Aorta (tissue), 5 donors: ENCODE measurements at regions of chr3 and their contacts with region 1.

Region 1: DNA sequence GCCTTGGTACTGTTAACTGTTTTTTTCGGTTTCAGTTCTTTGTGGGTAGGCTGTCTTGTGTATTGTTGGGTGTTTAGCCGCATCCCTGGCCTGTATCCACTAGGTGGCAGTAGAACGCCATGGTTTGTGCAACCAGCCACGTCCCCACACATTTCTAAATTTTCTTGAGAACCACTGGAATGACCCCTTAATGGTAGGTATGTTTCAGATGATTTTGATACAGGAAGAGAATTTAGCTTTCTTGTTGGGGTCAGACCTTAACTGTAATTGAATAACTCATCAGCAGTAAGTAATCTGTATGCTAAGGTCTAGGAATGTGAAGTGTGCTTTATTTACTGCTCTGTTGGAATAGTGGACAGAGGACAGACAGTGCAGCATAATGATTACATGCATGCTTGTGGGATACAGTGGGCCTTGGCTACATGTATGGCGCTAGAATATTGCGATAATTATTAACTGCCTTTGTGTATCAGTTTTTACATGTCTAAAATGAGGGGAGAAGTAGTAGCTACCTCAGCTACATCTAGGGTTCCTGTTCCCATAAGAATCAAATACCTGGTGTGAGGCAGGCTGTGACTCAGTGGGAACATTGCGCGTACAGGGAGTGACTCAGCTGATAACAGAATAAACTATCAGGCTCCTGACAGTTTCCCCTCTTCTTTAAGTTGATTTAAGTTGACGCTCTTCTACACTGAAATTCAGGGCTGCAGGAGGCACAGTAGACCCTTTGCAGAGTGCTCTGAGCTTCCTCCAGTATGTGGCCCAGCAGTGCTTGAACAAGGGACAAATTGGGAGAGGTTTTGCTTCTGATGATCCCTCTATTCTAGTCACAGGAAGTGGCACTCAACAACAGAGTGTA is 25.0 kb upstream of the GPR171 start:
- DNase-seq: peak; percentile 81 to 87
- ATAC-seq: peak; percentile 92
- H3K4me3 ChIP-seq: no peak overlapping the region
- H3K27ac ChIP-seq: no peak overlapping the region
- H3K4me1 ChIP-seq: no peaks in the 10 kb centered on the region
- H3K27me3 ChIP-seq: no peaks in the 10 kb centered on the region

Region 2: GRCh38 chr3:151168269-151169094 is 59.6 kb before region 1 on chr3:
- intact Hi-C with region 1: loop called in 1 of 2 experiments (anchors 5 kb)
- DNase-seq: peak; percentile 83 to 86
- ATAC-seq: peak; percentile 86
- H3K4me3 ChIP-seq: no peak overlapping the region
- H3K27ac ChIP-seq: no peak overlapping the region
- H3K4me1 ChIP-seq: no peaks in the 10 kb centered on the region
- H3K27me3 ChIP-seq: no peaks in the 10 kb centered on the region

Region 3: GRCh38 chr3:151282921-151283320 is 54.9 kb after region 1 on chr3:
- intact Hi-C with region 1: loop called (anchors 2 kb)
- DNase-seq: no peak
- ATAC-seq: peak; percentile 78
- H3K4me3 ChIP-seq: no peak overlapping the region
- H3K27ac ChIP-seq: no peak overlapping the region
- H3K4me1 ChIP-seq: peaks cover 0 to 1% of the 10 kb centered on the region in 2 donors
- H3K27me3 ChIP-seq: no peaks in the 10 kb centered on the region

Region 4: DNA sequence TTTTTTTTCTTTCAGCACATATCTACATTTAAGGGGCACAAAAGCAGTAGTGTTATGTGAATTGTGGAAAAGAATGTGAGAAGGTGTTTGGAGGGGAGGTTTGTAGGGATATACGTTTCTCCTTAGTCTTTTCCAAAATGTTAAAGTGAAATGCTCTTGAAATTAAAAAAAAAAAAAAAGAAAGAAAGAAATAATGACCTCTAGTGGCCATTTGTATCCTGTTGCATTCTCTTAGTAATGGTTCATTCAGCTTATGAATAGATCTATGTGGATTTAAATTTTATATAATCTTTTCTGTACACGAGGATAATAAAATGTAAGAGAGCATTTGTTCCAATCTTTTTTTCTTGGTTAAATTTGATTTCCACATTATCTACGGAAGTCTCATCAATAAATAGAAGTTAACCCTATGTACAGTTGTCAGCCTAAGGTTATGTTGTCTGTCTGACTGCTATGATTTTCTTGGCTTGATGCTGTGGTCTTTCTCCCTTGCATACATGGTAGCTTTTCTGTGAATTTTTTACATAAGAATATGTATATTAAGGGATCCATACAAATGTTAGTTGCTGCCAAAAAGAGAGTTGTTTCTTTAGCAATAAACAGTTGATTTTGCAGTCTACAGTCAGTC is 99.6 kb after region 1 on chr3:
- intact Hi-C with region 1: loop called in 1 of 2 experiments (anchors 5 kb)
- DNase-seq: no peak
- ATAC-seq: no peak
- H3K4me3 ChIP-seq: no peak overlapping the region
- H3K27ac ChIP-seq: no peak overlapping the region
- H3K4me1 ChIP-seq: no peaks in the 10 kb centered on the region
- H3K27me3 ChIP-seq: no peaks in the 10 kb centered on the region